ENCODE measurements at regions of chr1 and their contacts with region 1.

Region 1: GRCh38 chr1:26864610-26865527 is 1.9 kb downstream of the SFN start:
- DNase-seq: peak; percentile 93 to 95 (median 93)
- H3K4me3 ChIP-seq: peak overlapping the region; percentile 86 to 91
- H3K4me3 Mint-ChIP-seq: peak overlapping the region; percentile 93 to 99 (median 96)
- H3K27ac ChIP-seq: peak overlapping the region; percentile 75
- H3K27ac Mint-ChIP-seq: peak overlapping the region; percentile 86 to 97 (median 94)
- H3K4me1 ChIP-seq: peaks cover 30% of the 10 kb centered on the region
- H3K4me1 Mint-ChIP-seq: peaks cover 8 to 31% (median 23%) of the 10 kb centered on the region in 4 donors
- H3K27me3 ChIP-seq: no peaks in the 10 kb centered on the region
- H3K27me3 Mint-ChIP-seq: no peaks in the 10 kb centered on the region

Region 2: GRCh38 chr1:26811057-26811456 is 53.8 kb before region 1 on chr1:
- CTCF ChIA-PET with region 1: interaction called, 10 read pairs
- POLR2A ChIA-PET with region 1: no interaction called
- intact Hi-C with region 1: loop called (anchors 2 kb)
- DNase-seq: no peak
- H3K4me3 ChIP-seq: no peak overlapping the region
- H3K4me3 Mint-ChIP-seq: peak overlapping the region in 1 of 8 donors; percentile 39
- H3K27ac ChIP-seq: no peak overlapping the region
- H3K27ac Mint-ChIP-seq: peak overlapping the region; percentile 37 to 96 (median 80)
- H3K4me1 ChIP-seq: no peaks in the 10 kb centered on the region
- H3K4me1 Mint-ChIP-seq: peaks cover 3 to 12% (median 8%) of the 10 kb centered on the region in 4 donors
- H3K27me3 ChIP-seq: no peaks in the 10 kb centered on the region
- H3K27me3 Mint-ChIP-seq: no peaks in the 10 kb centered on the region

Region 3: GRCh38 chr1:26826261-26827105 is 38.4 kb before region 1 on chr1 and contains the start of gene ZDHHC18:
- CTCF ChIA-PET with region 1: interaction called, 15 read pairs
- POLR2A ChIA-PET with region 1: interaction called, 19 read pairs
- intact Hi-C with region 1: no loop called
- DNase-seq: peak; percentile 66 to 82 (median 78)
- H3K4me3 ChIP-seq: peak within 1 kb of the TSS; percentile 50 to 69
- H3K4me3 Mint-ChIP-seq: peak within 1 kb of the TSS; percentile 93 to 98 (median 94)
- H3K27ac ChIP-seq: peak within 1 kb of the TSS; percentile 94
- H3K27ac Mint-ChIP-seq: peak within 1 kb of the TSS; percentile 96 to 100 (median 100)
- H3K4me1 ChIP-seq: peaks cover 57% of the 10 kb centered on the region
- H3K4me1 Mint-ChIP-seq: peaks cover 47 to 72% (median 57%) of the 10 kb centered on the region in 4 donors
- H3K27me3 ChIP-seq: no peaks in the 10 kb centered on the region
- H3K27me3 Mint-ChIP-seq: no peaks in the 10 kb centered on the region
- total RNA-seq, gene ZDHHC18: 54.9 to 56.4 TPM

Region 4: DNA sequence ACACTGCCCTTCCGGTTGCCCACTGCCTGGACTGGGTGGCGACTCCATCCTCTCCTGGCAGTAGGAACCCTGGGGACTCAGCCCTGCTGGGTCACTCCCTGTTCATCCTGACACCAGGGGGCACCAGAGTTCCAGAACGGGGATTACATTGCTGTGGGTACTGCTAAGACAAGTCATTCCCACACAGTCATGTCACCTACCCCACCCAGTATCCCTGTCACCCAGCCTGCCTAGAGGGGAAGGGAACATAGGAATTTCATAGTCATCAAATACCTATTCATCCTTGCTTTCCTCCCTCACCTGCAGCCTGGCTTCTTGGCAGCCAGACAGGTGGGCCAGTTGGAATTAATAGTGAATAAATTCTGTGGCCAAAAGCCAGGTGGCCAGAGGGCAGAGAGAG is 11.7 kb before region 1 on chr1:
- CTCF ChIA-PET with region 1: interaction called, 19 read pairs
- POLR2A ChIA-PET with region 1: interaction called, 9 read pairs
- intact Hi-C with region 1: no loop called
- DNase-seq: peak; percentile 64 to 75 (median 69)
- H3K4me3 ChIP-seq: no peak overlapping the region
- H3K4me3 Mint-ChIP-seq: no peak overlapping the region
- H3K27ac ChIP-seq: no peak overlapping the region
- H3K27ac Mint-ChIP-seq: peak overlapping the region in 2 of 7 donors; percentile 11 to 52
- H3K4me1 ChIP-seq: no peaks in the 10 kb centered on the region
- H3K4me1 Mint-ChIP-seq: peaks cover 1 to 9% (median 4%) of the 10 kb centered on the region in 4 donors
- H3K27me3 ChIP-seq: no peaks in the 10 kb centered on the region
- H3K27me3 Mint-ChIP-seq: no peaks in the 10 kb centered on the region

Region 5: DNA sequence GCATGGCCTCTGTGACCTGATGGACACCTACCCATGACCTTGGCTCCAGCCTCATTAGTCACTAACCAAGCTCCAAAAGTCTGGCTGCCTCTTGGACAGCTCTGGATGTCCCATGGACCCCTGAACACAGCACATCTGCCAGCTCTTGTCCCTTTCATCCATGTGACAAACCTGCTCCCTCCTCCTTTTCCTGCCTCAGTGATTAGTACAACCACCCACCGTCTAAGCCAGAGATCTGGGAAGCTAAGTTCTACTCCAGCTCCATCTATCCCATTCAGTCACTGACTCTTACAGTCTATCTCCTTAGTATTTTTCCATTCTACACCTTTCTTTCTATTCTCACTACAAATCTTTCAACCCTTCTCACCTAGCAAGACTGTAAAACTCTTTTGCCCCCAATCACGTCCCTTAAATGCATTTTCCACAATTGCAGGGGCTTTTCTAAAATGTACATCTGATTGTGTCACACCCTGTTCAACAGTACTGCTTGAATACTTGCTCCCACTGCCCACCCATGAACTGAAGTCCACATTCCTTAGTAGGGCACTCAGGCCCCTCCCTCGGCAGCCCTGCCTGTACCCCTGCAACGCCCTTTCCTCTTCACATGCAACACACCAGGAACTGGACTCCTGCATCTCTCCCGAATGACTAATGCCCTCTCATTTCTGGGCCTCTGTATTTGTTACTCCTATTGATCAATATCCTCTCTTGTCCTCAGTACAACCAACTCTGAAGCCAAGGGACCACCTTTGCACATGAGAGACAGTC is 18.0 kb after region 1 on chr1:
- CTCF ChIA-PET with region 1: interaction called, 25 read pairs
- POLR2A ChIA-PET with region 1: interaction called, 14 read pairs
- intact Hi-C with region 1: loop called (anchors 1 kb)
- DNase-seq: no peak
- H3K4me3 ChIP-seq: no peak overlapping the region
- H3K4me3 Mint-ChIP-seq: no peak overlapping the region
- H3K27ac ChIP-seq: no peak overlapping the region
- H3K27ac Mint-ChIP-seq: peak overlapping the region in 4 of 7 donors; percentile 7 to 82 (median 22)
- H3K4me1 ChIP-seq: peaks cover 6% of the 10 kb centered on the region
- H3K4me1 Mint-ChIP-seq: peaks cover 6 to 14% (median 10%) of the 10 kb centered on the region in 4 donors
- H3K27me3 ChIP-seq: no peaks in the 10 kb centered on the region
- H3K27me3 Mint-ChIP-seq: no peaks in the 10 kb centered on the region

Region 6: GRCh38 chr1:26900001-26900814 is 35.3 kb after region 1 on chr1 and contains the start of gene GPATCH3:
- CTCF ChIA-PET with region 1: interaction called, 5 read pairs
- POLR2A ChIA-PET with region 1: interaction called, 31 read pairs
- intact Hi-C with region 1: no loop called
- DNase-seq: peak; percentile 87 to 89 (median 88)
- H3K4me3 ChIP-seq: peak within 1 kb of the TSS; percentile 86 to 93
- H3K4me3 Mint-ChIP-seq: peak within 1 kb of the TSS; percentile 87 to 100 (median 96)
- H3K27ac ChIP-seq: peak within 1 kb of the TSS; percentile 90
- H3K27ac Mint-ChIP-seq: peak within 1 kb of the TSS; percentile 92 to 100 (median 98)
- H3K4me1 ChIP-seq: peaks cover 25% of the 10 kb centered on the region
- H3K4me1 Mint-ChIP-seq: peaks cover 21 to 48% (median 26%) of the 10 kb centered on the region in 4 donors
- H3K27me3 ChIP-seq: no peaks in the 10 kb centered on the region
- H3K27me3 Mint-ChIP-seq: no peaks in the 10 kb centered on the region
- total RNA-seq, gene GPATCH3: 25.0 to 26.7 TPM